ENCODE measurements at regions of chr4 and their contacts with region 1.

Region 1: GRCh38 chr4:72326692-72327632 is 242.1 kb downstream of the ADAMTS3 start:
- DNase-seq: no peak
- H3K4me3 ChIP-seq: no peak overlapping the region
- H3K27ac ChIP-seq: no peak overlapping the region
- H3K27me3 ChIP-seq: peaks cover 0 to 3% (median 0%) of the 10 kb centered on the region in 45 donors
- CTCF ChIP-seq: peak in 55 of 56 donors; percentile 31 to 79 (median 56)

Region 2: GRCh38 chr4:72468904-72469502 is 142.0 kb after region 1 on chr4:
- intact Hi-C with region 1: loop called in 1 of 2 experiments (anchors 10 kb)
- DNase-seq: no peak
- H3K4me3 ChIP-seq: no peak overlapping the region
- H3K27ac ChIP-seq: no peak overlapping the region
- H3K27me3 ChIP-seq: no peaks in the 10 kb centered on the region
- CTCF ChIP-seq: peak; percentile 21 to 73 (median 53)

Region 3: GRCh38 chr4:72475956-72476355 is 149.0 kb after region 1 on chr4:
- intact Hi-C with region 1: loop called in 1 of 2 experiments (anchors 5 kb)
- DNase-seq: no peak
- H3K4me3 ChIP-seq: no peak overlapping the region
- H3K27ac ChIP-seq: no peak overlapping the region
- H3K27me3 ChIP-seq: no peaks in the 10 kb centered on the region
- CTCF ChIP-seq: no peak